Naive thymus-derived CD8-positive, alpha-beta T cell (primary cell): ENCODE measurements at regions of chr7 and their contacts with region 1.

Region 1: DNA sequence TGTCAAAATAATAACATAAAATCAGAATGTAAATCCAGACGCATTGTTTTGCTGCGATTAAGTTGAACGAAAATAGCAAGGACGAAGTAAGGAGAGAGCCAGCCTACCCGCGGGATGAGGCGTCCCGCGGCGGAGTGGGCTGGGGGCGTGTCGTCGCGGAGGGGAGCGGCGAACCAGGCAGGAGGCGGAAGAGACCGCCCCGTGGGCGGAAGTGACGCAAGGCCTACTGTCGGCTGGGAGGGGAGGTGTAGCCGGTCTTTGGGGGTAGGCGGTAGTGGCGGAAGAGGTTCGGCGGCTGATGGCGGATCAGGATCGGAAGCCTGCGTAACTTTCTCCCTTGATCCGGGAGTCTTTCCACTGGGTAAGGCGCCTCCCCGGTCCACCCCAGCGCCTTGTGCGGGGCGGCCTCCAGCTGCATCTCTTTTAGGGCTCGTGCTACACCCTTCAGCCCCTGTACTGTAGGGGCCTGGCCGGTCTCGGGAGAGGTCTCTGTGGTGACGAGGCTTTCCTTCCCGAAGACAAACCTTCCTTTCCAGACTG is at the start of gene TAX1BP1:
- DNase-seq: peak; percentile 91 to 97 (median 94)
- ATAC-seq: peak; percentile 88 to 89
- H3K4me3 Mint-ChIP-seq: peak within 1 kb of the TSS; percentile 86 to 99 (median 98)
- H3K27ac Mint-ChIP-seq: peak within 1 kb of the TSS; percentile 88 to 99 (median 98)
- H3K4me1 Mint-ChIP-seq: peaks cover 16 to 50% (median 43%) of the 10 kb centered on the region in 4 donors
- H3K27me3 Mint-ChIP-seq: no peaks in the 10 kb centered on the region
- polyA plus RNA-seq, gene TAX1BP1: 98.9 to 131 (median 103) TPM

Region 2: DNA sequence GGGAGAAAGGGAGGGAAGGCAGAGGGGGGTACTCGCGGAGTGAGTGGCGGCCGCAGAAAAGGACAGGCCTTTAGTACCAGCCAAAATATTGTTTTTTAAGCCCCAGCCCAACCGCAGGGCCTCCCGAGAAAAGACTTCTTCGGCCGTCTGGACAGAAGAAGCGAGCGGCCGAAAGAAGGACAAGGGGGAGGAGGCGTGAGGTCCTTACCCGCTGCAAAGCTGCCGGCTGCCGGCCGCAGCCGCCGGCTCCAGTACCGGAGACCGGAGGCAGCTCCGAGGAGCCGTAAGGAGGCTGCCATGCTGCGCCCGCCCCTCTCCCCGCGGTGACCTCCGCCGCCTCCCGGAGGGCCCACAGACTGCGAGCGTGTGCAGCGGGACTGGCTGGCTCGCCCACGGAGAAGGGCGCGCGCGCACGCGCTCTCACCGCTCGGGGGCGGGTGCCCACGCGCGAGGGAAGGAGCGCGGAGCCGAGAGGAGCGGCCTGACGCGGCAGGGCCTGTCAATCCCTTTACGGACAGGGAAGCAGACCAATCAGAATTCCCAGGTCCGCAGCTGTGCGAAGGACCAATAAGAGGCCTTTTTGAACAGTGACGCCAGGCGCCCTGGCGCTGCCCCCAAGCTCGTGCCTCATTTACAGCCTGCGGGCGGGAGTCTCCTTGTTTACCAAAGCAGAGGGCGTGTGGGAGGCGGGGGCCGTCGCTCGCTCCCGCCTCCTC is 77.3 kb before region 1 on chr7 and contains the start of gene HIBADH:
- POLR2A ChIA-PET with region 1: interaction called, 57 read pairs
- DNase-seq: peak; percentile 90 to 99 (median 96)
- ATAC-seq: peak; percentile 95 to 96
- H3K4me3 Mint-ChIP-seq: peak within 1 kb of the TSS; percentile 75 to 93 (median 88)
- H3K27ac Mint-ChIP-seq: peak within 1 kb of the TSS; percentile 83 to 97 (median 95)
- H3K4me1 Mint-ChIP-seq: peaks cover 8 to 28% (median 18%) of the 10 kb centered on the region in 4 donors
- H3K27me3 Mint-ChIP-seq: no peaks in the 10 kb centered on the region
- polyA plus RNA-seq, gene HIBADH: 34.1 to 41.7 (median 40.8) TPM